ENCODE measurements at regions of chr17 and their contacts with region 1.

Region 1: DNA sequence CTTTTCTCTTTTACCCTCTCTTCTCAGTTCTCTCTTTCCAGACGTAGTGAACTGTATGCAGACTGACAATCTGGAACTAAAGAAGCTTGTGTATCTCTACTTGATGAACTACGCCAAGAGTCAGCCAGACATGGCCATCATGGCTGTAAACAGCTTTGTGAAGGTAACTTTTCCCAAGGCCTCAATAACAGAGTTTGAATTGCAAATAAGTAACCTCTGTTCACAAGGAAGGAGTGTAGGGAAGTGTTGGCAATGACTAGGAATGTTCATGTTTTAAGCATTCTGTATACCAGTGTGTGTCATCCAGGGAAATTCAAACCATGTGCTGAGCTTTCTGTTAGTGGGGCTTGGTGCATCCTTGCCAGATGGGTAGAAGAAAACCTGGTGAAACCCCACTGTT is 18.6 kb downstream of the AP2B1 start:
- DNase-seq: no peak
- ATAC-seq: no peak
- H3K4me3 ChIP-seq: no peak overlapping the region
- H3K4me1 ChIP-seq: no peaks in the 10 kb centered on the region
- CTCF ChIP-seq: no peak

Region 2: DNA sequence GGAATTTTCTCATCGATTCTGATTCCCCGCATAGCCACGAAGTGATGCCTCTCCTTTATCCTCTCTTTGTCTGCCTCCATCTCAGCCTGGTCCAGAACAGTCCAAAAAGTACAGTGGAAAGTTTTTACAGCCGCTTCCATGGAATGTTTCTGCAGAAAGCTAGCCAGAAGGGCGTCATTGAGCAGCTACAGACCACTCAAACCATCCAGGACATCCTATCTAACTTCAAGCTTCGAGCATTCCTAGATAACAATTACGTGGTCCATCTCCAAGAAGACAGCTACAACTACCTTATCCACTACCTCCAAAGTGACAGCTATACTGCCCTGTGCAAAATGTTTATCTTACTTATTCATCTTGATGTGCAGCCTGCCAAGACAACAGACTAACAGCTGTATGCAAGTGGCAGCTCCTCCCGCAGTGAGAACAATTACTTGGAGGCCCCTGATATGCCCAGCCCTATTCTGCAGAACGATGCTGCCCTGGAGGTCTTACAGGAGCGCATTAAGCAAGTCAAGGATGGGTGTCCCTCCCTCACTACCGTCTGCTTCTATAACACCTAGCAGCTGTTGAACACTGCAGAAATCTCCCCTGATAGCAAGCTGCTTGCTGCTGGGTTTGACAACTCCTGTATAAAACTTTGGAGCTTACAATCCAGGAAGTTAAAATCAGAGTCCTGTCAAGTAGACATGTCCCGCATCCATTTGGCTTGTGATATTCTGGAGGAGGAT is 107.1 kb before region 1 on chr17:
- intact Hi-C with region 1: no loop called
- DNase-seq: no peak
- ATAC-seq: no peak
- H3K4me3 ChIP-seq: no peak overlapping the region
- H3K4me1 ChIP-seq: no peaks in the 10 kb centered on the region
- CTCF ChIP-seq: no peak

Region 3: DNA sequence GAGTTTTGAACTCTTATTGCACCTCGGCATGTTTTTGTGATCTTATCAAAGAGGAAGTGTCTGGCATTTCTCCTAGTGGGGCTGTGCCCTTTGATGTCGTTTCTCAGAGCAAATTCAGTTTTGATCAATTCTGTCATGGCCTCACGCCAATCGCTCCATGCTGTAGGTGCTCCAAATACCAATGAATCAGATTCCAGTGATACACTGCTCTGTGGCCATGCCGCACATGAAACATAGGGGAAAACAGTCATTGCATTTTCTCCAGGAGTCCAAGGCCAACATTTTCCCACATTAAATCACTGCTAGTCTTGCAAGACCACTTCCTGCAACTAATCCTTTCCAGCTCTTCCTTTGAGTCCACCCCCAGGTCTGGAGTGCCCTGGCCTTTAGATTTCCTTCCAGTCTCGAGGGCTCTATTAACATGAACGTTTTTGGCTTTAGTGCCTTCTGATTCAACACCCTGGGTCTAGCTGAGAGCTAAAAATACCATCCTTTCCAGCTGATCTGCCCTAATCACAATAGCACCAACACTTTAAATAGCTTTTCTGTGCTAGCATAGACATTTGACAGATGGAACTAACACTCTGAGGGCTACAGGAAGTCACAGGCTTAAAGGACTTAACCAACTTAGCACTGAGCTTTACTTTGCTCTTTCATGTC is 107.5 kb after region 1 on chr17:
- intact Hi-C with region 1: no loop called
- DNase-seq: no peak
- ATAC-seq: no peak
- H3K4me3 ChIP-seq: no peak overlapping the region
- H3K4me1 ChIP-seq: no peaks in the 10 kb centered on the region
- CTCF ChIP-seq: no peak

Region 4: DNA sequence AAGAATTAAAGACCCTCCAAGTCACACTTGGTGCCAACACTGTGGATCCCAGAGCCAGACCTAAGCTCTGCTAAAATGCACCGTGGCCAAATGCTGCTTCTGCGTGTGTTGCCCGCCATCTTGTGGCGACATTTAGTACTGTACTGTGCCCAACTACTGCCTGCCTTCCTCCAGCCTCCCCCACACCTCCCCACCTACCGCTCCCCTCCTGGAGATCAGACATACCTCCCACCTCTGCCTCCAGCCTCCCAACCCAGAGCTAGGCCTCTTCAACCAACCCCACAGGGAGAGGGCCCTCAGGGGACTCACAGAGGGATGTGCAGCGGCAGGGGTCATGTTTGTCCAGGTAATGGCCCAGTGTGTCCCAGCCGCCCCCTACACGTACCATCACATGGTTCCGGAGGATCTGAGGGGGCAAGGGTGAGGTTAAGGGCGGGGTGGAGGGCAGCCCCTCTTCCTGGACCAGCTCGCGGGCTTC is 141.9 kb after region 1 on chr17:
- intact Hi-C with region 1: loop called in 1 of 2 experiments (anchors 10 kb)
- DNase-seq: peak in 2 of 3 donors; percentile 76 to 90
- ATAC-seq: peak; percentile 86
- H3K4me3 ChIP-seq: no peak overlapping the region
- H3K4me1 ChIP-seq: no peaks in the 10 kb centered on the region
- CTCF ChIP-seq: peak; percentile 60

Measured in mucosa of descending colon (tissue), 3 donors.